B cell (primary cell): ENCODE measurements at regions of chr17 and their contacts with region 1.

Region 1: DNA sequence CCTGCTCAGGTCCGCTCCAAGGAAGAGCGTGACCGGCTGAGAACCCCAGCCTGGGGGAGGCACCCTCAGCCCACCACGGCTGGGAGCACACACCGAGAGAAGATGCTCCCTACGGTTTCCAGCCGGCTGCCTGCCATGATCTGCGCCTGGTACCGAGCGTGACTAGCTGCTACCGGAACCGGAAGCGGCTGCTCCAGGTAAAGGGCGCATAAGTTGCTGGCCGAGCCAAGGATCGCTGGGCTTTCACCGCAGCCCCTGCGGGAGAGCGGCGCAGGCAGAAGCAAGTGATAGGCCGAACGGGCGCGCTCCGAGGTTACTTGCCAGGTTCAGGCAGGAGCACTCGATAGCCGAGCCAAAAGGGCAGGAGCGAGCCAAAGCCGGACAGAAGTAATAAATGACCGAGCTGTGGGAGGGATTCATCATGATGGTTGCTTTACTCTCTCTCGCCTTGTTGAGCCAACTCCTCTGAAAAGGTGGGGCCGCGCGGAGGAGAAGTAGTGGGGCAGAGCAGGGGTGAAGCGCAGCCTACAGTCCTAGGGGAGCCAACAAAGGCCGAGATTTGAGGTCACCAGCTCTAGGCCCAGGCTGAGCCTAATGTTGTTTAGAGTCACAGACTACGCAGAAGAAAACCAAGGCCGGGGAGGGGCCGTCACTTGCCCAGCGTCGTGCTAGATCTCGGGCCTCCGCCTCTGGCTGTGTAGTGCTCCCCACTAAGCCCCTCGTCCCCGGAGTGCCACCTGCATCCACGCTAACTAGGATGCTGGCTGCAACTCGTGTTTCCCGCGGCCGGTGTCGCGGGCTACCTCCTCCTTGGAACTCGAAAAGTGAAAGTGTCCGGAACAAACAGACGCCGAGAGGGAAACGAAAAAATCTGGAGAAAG is at the start of gene MRPS23:
- DNase-seq: peak; percentile 97
- ATAC-seq: peak; percentile 95
- H3K4me3 ChIP-seq: peak within 1 kb of the TSS; percentile 64 to 96 (median 85)
- H3K4me3 Mint-ChIP-seq: peak within 1 kb of the TSS; percentile 99
- H3K27ac ChIP-seq: peak within 1 kb of the TSS; percentile 86 to 92
- H3K27ac Mint-ChIP-seq: peak within 1 kb of the TSS; percentile 100
- H3K4me1 ChIP-seq: peaks cover 17 to 28% of the 10 kb centered on the region in 2 donors
- H3K4me1 Mint-ChIP-seq: peaks cover 39% of the 10 kb centered on the region
- H3K27me3 ChIP-seq: no peaks in the 10 kb centered on the region
- H3K27me3 Mint-ChIP-seq: no peaks in the 10 kb centered on the region
- CTCF ChIP-seq: no peak
- total RNA-seq, gene MRPS23: 25.4 and 32.3 TPM in 2 replicates

Region 2: GRCh38 chr17:56715613-56716357 is 1134.3 kb before region 1 on chr17:
- CTCF ChIA-PET with region 1: no interaction called
- POLR2A ChIA-PET with region 1: no interaction called
- intact Hi-C with region 1: no loop called
- DNase-seq: peak; percentile 77
- ATAC-seq: peak; percentile 88
- H3K4me3 ChIP-seq: no peak overlapping the region
- H3K4me3 Mint-ChIP-seq: no peak overlapping the region
- H3K27ac ChIP-seq: no peak overlapping the region
- H3K27ac Mint-ChIP-seq: no peak overlapping the region
- H3K4me1 ChIP-seq: peaks cover 3 to 5% of the 10 kb centered on the region in 2 donors
- H3K4me1 Mint-ChIP-seq: peaks cover 4% of the 10 kb centered on the region
- H3K27me3 ChIP-seq: no peaks in the 10 kb centered on the region
- H3K27me3 Mint-ChIP-seq: no peaks in the 10 kb centered on the region
- CTCF ChIP-seq: peak; percentile 86

Region 3: DNA sequence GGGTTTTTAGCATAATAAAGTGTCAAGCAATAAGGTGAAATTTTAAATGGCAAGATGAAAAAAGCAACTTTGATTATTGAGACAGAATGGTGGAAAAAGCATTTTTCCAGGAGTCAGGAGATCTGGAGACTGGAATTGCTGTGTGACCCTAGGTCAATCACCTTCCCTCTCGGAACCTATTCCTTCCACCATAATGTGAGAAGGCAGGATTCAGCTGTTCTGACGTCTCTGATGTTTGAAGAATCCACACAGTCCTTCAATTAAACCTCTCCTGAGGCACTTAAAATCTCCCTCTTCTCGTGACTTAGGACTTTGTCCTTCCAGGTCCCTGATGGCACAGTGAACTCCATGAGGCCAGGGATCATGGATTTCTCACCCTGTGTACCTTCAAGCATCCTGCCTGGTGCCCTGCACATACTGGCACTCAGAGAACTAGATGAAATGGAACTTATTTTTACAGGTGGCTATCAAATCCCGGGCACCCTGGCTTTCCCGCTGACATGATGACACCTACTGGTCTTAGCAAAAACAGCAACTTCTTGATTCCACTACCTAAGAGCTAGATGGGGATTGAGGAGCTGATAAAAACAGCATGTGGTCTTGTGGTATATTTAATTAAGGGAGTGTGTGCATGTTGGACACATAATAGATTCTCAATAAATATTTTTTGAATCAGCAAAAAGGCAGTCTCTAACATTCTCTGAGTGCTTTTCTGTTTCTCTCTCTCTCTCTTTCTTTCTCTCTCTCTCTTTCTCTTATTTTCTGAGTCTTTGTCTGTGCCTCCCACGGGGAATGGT is 102.7 kb before region 1 on chr17:
- CTCF ChIA-PET with region 1: no interaction called
- POLR2A ChIA-PET with region 1: no interaction called
- intact Hi-C with region 1: no loop called
- DNase-seq: peak; percentile 75
- ATAC-seq: peak; percentile 73
- H3K4me3 ChIP-seq: no peak overlapping the region
- H3K4me3 Mint-ChIP-seq: no peak overlapping the region
- H3K27ac ChIP-seq: no peak overlapping the region
- H3K27ac Mint-ChIP-seq: no peak overlapping the region
- H3K4me1 ChIP-seq: peaks cover 12 to 14% of the 10 kb centered on the region in 2 donors
- H3K4me1 Mint-ChIP-seq: peaks cover 17% of the 10 kb centered on the region
- H3K27me3 ChIP-seq: peaks cover 0 to 4% (median 0%) of the 10 kb centered on the region in 4 experiments
- H3K27me3 Mint-ChIP-seq: peaks cover 14% of the 10 kb centered on the region
- CTCF ChIP-seq: peak; percentile 82

Region 4: GRCh38 chr17:57861000-57861789 is 11.1 kb after region 1 on chr17:
- CTCF ChIA-PET with region 1: interaction called, 40 read pairs
- POLR2A ChIA-PET with region 1: interaction called, 5 read pairs
- intact Hi-C with region 1: no loop called
- DNase-seq: peak; percentile 62
- ATAC-seq: peak; percentile 60
- H3K4me3 ChIP-seq: peak overlapping the region; percentile 3 to 59 (median 39)
- H3K4me3 Mint-ChIP-seq: peak overlapping the region; percentile 90
- H3K27ac ChIP-seq: no peak overlapping the region
- H3K27ac Mint-ChIP-seq: peak overlapping the region; percentile 11
- H3K4me1 ChIP-seq: peaks cover 17 to 20% of the 10 kb centered on the region in 2 donors
- H3K4me1 Mint-ChIP-seq: peaks cover 16% of the 10 kb centered on the region
- H3K27me3 ChIP-seq: peaks cover 0 to 51% (median 19%) of the 10 kb centered on the region in 4 experiments
- H3K27me3 Mint-ChIP-seq: peaks cover 23% of the 10 kb centered on the region
- CTCF ChIP-seq: no peak

Region 5: GRCh38 chr17:57987580-57988421 is 137.7 kb after region 1 on chr17 and contains the start of gene VEZF1:
- CTCF ChIA-PET with region 1: interaction called, 468 read pairs
- POLR2A ChIA-PET with region 1: interaction called, 6 read pairs
- intact Hi-C with region 1: loop called (anchors 1 kb)
- DNase-seq: peak; percentile 89
- ATAC-seq: peak; percentile 70
- H3K4me3 ChIP-seq: peak within 1 kb of the TSS; percentile 50 to 89 (median 82)
- H3K4me3 Mint-ChIP-seq: peak within 1 kb of the TSS; percentile 95
- H3K27ac ChIP-seq: peak within 1 kb of the TSS; percentile 66 to 82
- H3K27ac Mint-ChIP-seq: peak within 1 kb of the TSS; percentile 97
- H3K4me1 ChIP-seq: peaks cover 36 to 41% of the 10 kb centered on the region in 2 donors
- H3K4me1 Mint-ChIP-seq: peaks cover 58% of the 10 kb centered on the region
- H3K27me3 ChIP-seq: no peaks in the 10 kb centered on the region
- H3K27me3 Mint-ChIP-seq: no peaks in the 10 kb centered on the region
- CTCF ChIP-seq: no peak
- total RNA-seq, gene VEZF1: 63.9 and 75.9 TPM in 2 replicates

Region 6: GRCh38 chr17:58082870-58083490 is 232.9 kb after region 1 on chr17 and contains the start of gene DYNLL2:
- CTCF ChIA-PET with region 1: no interaction called
- POLR2A ChIA-PET with region 1: no interaction called
- intact Hi-C with region 1: loop called (anchors 1 kb)
- DNase-seq: peak; percentile 90
- ATAC-seq: peak; percentile 80
- H3K4me3 ChIP-seq: peak within 1 kb of the TSS; percentile 70 to 89 (median 79)
- H3K4me3 Mint-ChIP-seq: peak within 1 kb of the TSS; percentile 87
- H3K27ac ChIP-seq: peak within 1 kb of the TSS; percentile 66 to 86
- H3K27ac Mint-ChIP-seq: peak within 1 kb of the TSS; percentile 81
- H3K4me1 ChIP-seq: peaks cover 16 to 19% of the 10 kb centered on the region in 2 donors
- H3K4me1 Mint-ChIP-seq: peaks cover 31% of the 10 kb centered on the region
- H3K27me3 ChIP-seq: peaks cover 0 to 5% (median 0%) of the 10 kb centered on the region in 4 experiments
- H3K27me3 Mint-ChIP-seq: no peaks in the 10 kb centered on the region
- CTCF ChIP-seq: no peak
- total RNA-seq, gene DYNLL2: 24.4 and 25.2 TPM in 2 replicates